PC-3 (cell line): ENCODE measurements at regions of chrX and their contacts with region 1.

Region 1: GRCh38 chrX:64894454-64895038 is 81.7 kb downstream of the ZC4H2 start:
- DNase-seq: peak; percentile 64
- ATAC-seq: peak; percentile 89
- H3K4me3 ChIP-seq: no peak overlapping the region
- H3K27ac ChIP-seq: no peak overlapping the region
- H3K4me1 ChIP-seq: no peaks in the 10 kb centered on the region
- H3K27me3 ChIP-seq: no peaks in the 10 kb centered on the region
- CTCF ChIP-seq: peak; percentile 82

Region 2: DNA sequence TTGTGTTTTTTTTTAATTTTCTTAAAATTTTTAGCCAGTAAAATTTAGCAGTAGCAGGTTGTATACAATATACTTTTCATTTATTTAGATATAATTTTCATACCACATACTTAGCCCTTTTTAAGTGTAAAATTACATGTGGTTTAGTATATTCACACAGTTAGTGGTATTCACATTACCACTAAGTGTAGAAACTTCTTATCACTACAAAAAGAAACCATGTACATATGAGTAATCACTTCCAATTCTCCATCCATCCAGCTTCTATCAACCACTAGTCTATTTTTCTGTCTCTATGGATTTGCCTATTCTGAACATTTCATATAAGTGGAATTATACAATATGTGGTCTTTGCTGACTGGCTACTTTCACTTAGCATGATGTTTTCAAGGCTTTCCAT is 27.3 kb before region 1 on chrX:
- CTCF ChIA-PET with region 1: no interaction called
- POLR2A ChIA-PET with region 1: no interaction called
- intact Hi-C with region 1: no loop called
- DNase-seq: no peak
- ATAC-seq: no peak
- H3K4me3 ChIP-seq: no peak overlapping the region
- H3K27ac ChIP-seq: no peak overlapping the region
- H3K4me1 ChIP-seq: no peaks in the 10 kb centered on the region
- H3K27me3 ChIP-seq: no peaks in the 10 kb centered on the region
- CTCF ChIP-seq: no peak

Region 3: GRCh38 chrX:65034668-65035445 is 140.3 kb after region 1 on chrX:
- CTCF ChIA-PET with region 1: no interaction called
- POLR2A ChIA-PET with region 1: no interaction called
- intact Hi-C with region 1: loop called (anchors 1 kb)
- DNase-seq: peak; percentile 82
- ATAC-seq: peak; percentile 87
- H3K4me3 ChIP-seq: peak within 1 kb of the TSS; percentile 71
- H3K27ac ChIP-seq: no peak within 1 kb of the TSS
- H3K4me1 ChIP-seq: peaks cover 7% of the 10 kb centered on the region; the same call in 1 of the 2 replicates
- H3K27me3 ChIP-seq: no peaks in the 10 kb centered on the region
- CTCF ChIP-seq: peak; percentile 56

Region 4: GRCh38 chrX:65196758-65197360 is 302.3 kb after region 1 on chrX:
- CTCF ChIA-PET with region 1: no interaction called
- POLR2A ChIA-PET with region 1: no interaction called
- intact Hi-C with region 1: loop called (anchors 2 kb)
- DNase-seq: peak; percentile 44
- ATAC-seq: peak; percentile 96
- H3K4me3 ChIP-seq: peak overlapping the region; percentile 50; the same call in 1 of the 2 replicates
- H3K27ac ChIP-seq: no peak overlapping the region
- H3K4me1 ChIP-seq: no peaks in the 10 kb centered on the region
- H3K27me3 ChIP-seq: no peaks in the 10 kb centered on the region
- CTCF ChIP-seq: peak; percentile 36; the same call in 1 of the 2 replicates

Region 5: DNA sequence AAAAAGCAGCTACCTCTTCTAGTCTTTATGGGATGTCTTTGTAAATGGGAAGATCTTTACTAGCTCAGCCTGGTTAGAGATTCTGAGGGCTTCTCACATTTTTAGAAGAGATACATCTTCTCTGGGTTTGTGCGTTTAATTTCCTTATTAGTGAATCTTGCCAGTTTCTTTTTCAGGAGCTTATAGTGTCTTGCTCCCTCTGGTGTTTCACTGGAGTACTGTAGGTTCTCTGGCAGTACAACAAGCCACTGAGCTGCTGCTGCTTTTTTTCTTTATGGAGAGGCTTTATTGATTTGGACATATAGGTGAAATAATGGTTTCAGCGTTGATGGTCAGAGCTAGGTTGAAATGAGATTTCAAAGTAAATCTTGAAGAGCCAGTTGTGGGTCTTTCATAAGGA is 557.1 kb after region 1 on chrX:
- CTCF ChIA-PET with region 1: no interaction called
- POLR2A ChIA-PET with region 1: no interaction called
- intact Hi-C with region 1: loop called (anchors 1 kb)
- DNase-seq: peak; percentile 53
- ATAC-seq: peak; percentile 48; the same call in 1 of the 2 replicates
- H3K4me3 ChIP-seq: no peak overlapping the region
- H3K27ac ChIP-seq: no peak overlapping the region
- H3K4me1 ChIP-seq: no peaks in the 10 kb centered on the region
- H3K27me3 ChIP-seq: no peaks in the 10 kb centered on the region
- CTCF ChIP-seq: peak; percentile 74

Region 6: GRCh38 chrX:65502618-65503017 is 608.1 kb after region 1 on chrX:
- CTCF ChIA-PET with region 1: no interaction called
- POLR2A ChIA-PET with region 1: no interaction called
- intact Hi-C with region 1: no loop called
- DNase-seq: no peak
- ATAC-seq: no peak
- H3K4me3 ChIP-seq: no peak overlapping the region
- H3K27ac ChIP-seq: no peak overlapping the region
- H3K4me1 ChIP-seq: no peaks in the 10 kb centered on the region
- H3K27me3 ChIP-seq: no peaks in the 10 kb centered on the region
- CTCF ChIP-seq: no peak